Activated naive CD4-positive, alpha-beta T cell treated with anti-CD3 and anti-CD28 coated beads for 36 hours (primary cell): ENCODE measurements at regions of chr9 and their contacts with region 1.

Region 1: GRCh38 chr9:19127881-19128500 is 699 bp upstream of the PLIN2 start:
- DNase-seq: peak; percentile 45
- H3K4me3 Mint-ChIP-seq: peak overlapping the region; percentile 92
- H3K27ac Mint-ChIP-seq: peak overlapping the region; percentile 91
- H3K4me1 Mint-ChIP-seq: peaks cover 53% of the 10 kb centered on the region
- H3K27me3 Mint-ChIP-seq: no peaks in the 10 kb centered on the region

Region 2: GRCh38 chr9:19161257-19162025 is 33.5 kb after region 1 on chr9:
- CTCF ChIA-PET with region 1: interaction called, 10 read pairs
- intact Hi-C with region 1: loop called (anchors 1 kb)
- DNase-seq: peak; percentile 87
- H3K4me3 Mint-ChIP-seq: no peak overlapping the region
- H3K27ac Mint-ChIP-seq: peak overlapping the region; percentile 81
- H3K4me1 Mint-ChIP-seq: peaks cover 23% of the 10 kb centered on the region
- H3K27me3 Mint-ChIP-seq: no peaks in the 10 kb centered on the region